ENCODE measurements at regions of chr2 and their contacts with region 1.

Region 1: DNA sequence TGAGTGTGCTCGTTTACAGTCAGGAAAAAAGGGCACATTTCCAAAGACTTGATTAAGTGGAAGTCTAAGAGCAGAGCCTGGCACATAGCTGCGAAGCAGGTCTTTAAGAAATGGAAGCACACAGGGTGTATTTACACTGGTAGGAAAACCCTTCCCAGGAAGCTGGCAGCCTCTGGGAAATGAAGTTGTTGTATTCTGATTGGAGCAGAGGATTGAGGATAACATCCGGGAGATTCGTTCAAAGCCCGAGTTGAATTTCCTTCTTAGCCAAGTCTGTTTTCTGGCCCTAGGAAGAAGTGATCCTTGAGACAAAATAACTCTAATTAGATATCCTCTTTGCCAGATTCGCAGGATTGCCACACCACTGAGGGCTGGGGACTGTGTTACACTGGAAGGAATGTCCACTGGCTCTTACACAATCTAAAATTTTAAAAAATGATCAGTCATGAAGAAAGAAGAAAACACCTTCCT is 75.9 kb downstream of the ITGB1BP1 start:
- DNase-seq: peak in 4 of 5 donors; percentile 31 to 72 (median 48)
- ATAC-seq: peak; percentile 73 to 96 (median 84)
- H3K4me3 ChIP-seq: peak overlapping the region in 1 of 12 donors; percentile 3
- H3K27ac ChIP-seq: peak overlapping the region; percentile 12 to 72 (median 55)
- H3K4me1 ChIP-seq: peaks cover 0 to 28% (median 13%) of the 10 kb centered on the region in 12 donors
- H3K27me3 ChIP-seq: no peaks in the 10 kb centered on the region
- CTCF ChIP-seq: no peak
- POLR2A ChIP-seq: no peak

Region 2: DNA sequence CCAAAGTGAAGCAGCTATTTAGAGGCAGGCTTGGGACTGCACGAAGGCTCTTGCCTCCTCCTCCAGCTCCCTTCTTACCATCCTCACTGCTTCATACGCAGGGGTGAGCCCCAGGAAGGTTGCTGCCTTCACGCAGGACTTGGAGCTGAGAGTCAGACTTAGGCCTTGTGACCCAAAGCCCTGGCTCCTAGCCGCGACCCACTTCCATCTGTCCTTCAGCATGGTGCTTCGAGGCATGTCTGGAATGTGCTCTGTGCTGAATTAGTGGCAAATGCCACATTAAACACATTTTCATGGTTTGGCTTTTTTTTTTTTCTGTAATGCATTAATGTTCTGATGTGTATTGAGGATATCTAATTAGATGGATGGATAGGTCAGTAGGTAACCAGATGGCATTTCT is 38.4 kb after region 1 on chr2:
- intact Hi-C with region 1: loop called in 1 of 10 experiments (anchors 2 kb)
- DNase-seq: no peak
- ATAC-seq: peak in 1 of 4 donors; percentile 33
- H3K4me3 ChIP-seq: no peak overlapping the region
- H3K27ac ChIP-seq: peak overlapping the region in 1 of 12 donors; percentile 77
- H3K4me1 ChIP-seq: peaks cover 0 to 24% (median 4%) of the 10 kb centered on the region in 12 donors
- H3K27me3 ChIP-seq: no peaks in the 10 kb centered on the region
- CTCF ChIP-seq: no peak
- POLR2A ChIP-seq: no peak

Measured in heart left ventricle (tissue), 16 donors.